Mammary epithelial cell (primary cell): ENCODE measurements at regions of chrX and their contacts with region 1.

Region 1: GRCh38 chrX:15674841-15675489 is 10.4 kb upstream of the CLTRN start:
- DNase-seq: peak; percentile 97
- H3K4me3 ChIP-seq: peak overlapping the region; percentile 59 to 90 (median 82)
- H3K27ac ChIP-seq: peak overlapping the region; percentile 97
- H3K4me1 ChIP-seq: peaks cover 20% of the 10 kb centered on the region
- H3K27me3 ChIP-seq: no peaks in the 10 kb centered on the region
- CTCF ChIP-seq: no peak

Region 2: GRCh38 chrX:15349046-15349445 is 325.9 kb before region 1 on chrX:
- CTCF ChIA-PET with region 1: no interaction called
- dilution Hi-C with region 1: no loop called
- in situ Hi-C with region 1: no loop called
- intact Hi-C with region 1: loop called (anchors 10 kb)
- DNase-seq: peak; percentile 64
- H3K4me3 ChIP-seq: no peak overlapping the region
- H3K27ac ChIP-seq: no peak overlapping the region
- H3K4me1 ChIP-seq: no peaks in the 10 kb centered on the region
- H3K27me3 ChIP-seq: no peaks in the 10 kb centered on the region
- CTCF ChIP-seq: peak; percentile 57 to 71

Region 3: DNA sequence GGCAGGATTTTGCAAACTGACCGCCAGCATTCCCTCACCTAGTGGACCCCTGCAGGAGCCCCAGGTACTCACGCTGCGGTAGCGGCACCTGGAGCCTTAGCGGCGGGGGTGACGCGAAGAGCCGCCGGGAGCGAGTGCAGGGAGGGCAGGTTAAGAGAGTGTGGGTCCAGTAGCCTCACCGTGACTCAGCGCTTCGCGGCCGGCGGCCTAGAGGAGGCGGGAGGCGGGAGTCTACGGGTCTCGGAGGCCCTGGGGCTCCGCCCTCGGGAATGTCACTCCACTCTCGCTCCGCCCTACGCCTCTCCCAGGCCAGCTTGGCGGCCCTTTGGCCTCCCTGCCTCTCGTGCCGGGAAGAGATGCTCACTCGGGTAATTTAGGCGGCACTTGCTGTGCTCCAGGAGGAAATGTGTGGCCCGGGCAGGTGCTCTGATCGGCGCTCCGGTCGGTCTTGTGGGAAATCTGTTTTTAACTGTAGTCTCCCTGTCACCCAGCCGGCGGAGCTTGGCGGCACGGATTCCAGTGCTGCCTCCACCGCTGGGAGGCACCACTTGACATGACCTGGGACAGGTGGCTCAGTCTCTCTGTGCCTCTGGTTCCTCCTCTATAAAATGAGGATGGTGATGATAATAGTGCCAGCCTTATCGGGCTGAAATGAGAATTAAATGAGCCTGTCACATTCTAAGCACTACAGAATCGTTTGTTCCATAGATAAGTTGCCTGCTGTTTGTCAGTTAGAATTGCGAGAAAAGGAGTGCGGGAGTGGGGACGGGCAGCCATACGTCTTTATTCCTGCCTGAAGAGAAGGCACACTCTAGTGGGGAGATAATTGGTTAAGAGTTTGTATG is 181.6 kb before region 1 on chrX and contains the start of gene PIR:
- CTCF ChIA-PET with region 1: no interaction called
- dilution Hi-C with region 1: no loop called
- in situ Hi-C with region 1: loop called in 1 of 2 experiments (anchors 25 kb)
- intact Hi-C with region 1: loop called (anchors 2 kb)
- DNase-seq: peak; percentile 95
- H3K4me3 ChIP-seq: peak within 1 kb of the TSS; percentile 53 to 70 (median 57)
- H3K27ac ChIP-seq: peak within 1 kb of the TSS; percentile 73
- H3K4me1 ChIP-seq: peaks cover 34% of the 10 kb centered on the region
- H3K27me3 ChIP-seq: no peaks in the 10 kb centered on the region
- CTCF ChIP-seq: peak; percentile 44 to 61
- total RNA-seq, gene PIR: 32.8 to 40.9 TPM

Region 4: GRCh38 chrX:15594371-15594770 is 80.6 kb before region 1 on chrX:
- CTCF ChIA-PET with region 1: no interaction called
- dilution Hi-C with region 1: no loop called
- in situ Hi-C with region 1: no loop called
- intact Hi-C with region 1: loop called (anchors 1 kb)
- DNase-seq: no peak
- H3K4me3 ChIP-seq: no peak overlapping the region
- H3K27ac ChIP-seq: no peak overlapping the region
- H3K4me1 ChIP-seq: peaks cover 5% of the 10 kb centered on the region
- H3K27me3 ChIP-seq: no peaks in the 10 kb centered on the region
- CTCF ChIP-seq: peak; percentile 43 to 74

Region 5: DNA sequence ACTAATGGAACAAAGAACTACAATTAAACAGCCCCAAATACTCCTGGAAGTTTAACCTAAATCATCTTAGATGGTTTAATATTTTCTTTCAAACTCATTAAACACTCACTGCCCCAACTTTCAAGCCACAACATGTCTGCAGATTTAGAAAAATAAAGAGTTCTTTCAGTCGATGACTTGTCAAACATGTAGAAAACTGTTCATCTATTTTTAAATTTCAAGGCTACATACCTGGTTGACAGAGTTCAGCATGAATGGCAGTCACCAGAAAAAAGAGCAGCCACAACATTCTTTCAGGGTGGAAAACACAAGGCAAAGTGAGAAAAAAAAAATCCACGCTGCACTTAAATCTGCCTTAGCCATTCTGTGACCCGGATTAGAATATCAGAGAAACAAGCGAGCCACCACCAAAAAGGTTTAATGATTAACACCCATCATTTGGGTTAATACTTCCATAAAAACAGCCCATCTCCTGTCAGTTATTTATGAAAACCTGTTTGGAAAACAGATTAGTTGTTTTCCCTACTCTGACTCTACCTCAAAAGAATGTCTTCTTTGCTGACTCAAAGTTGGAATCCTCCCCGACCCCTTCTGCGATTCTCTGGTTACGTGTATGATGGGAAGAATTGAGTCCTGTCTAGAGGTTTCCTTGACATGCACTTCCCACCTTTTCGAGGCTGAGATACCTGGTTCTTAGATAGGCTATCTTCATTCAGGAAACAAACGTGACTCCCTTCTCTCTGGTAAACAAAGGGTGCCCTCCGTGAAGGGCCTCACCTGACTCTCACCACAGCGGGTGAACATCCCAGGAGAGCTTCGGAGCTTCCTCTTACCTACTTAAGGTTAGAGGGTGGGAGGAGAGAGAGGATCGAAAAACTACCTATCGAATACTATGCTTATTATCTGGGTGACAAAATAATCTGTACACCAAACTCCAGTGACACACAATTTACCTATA is 10.2 kb before region 1 on chrX and contains the start of gene CLTRN:
- CTCF ChIA-PET with region 1: interaction called, 3 read pairs
- dilution Hi-C with region 1: no loop called
- in situ Hi-C with region 1: no loop called
- intact Hi-C with region 1: loop called (anchors 1 kb)
- DNase-seq: peak; percentile 86
- H3K4me3 ChIP-seq: peak within 1 kb of the TSS in 2 of 3 experiments; percentile 12 to 40
- H3K27ac ChIP-seq: peak within 1 kb of the TSS; percentile 94
- H3K4me1 ChIP-seq: peaks cover 34% of the 10 kb centered on the region
- H3K27me3 ChIP-seq: no peaks in the 10 kb centered on the region
- CTCF ChIP-seq: no peak
- total RNA-seq, gene CLTRN: 2.0 to 2.2 TPM

Region 6: DNA sequence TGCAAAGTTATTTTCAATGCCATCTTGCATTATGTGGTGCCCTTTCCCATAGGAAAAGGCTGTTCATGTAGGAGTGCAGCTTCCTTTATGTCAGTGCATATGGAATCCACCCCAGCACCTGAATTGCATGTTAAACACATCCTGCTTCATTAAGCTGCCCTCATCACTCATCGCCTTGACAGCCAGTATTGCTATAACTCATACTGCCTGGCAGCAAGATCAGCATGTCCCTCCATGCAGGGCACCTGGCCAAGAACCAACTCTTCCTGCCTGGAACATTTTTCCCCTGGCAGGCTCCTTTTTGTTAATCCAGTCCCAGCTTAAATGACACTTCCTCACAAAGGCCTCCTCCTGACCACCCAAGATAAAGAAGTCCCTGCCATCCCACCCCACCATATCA is 39.6 kb after region 1 on chrX:
- CTCF ChIA-PET with region 1: no interaction called
- dilution Hi-C with region 1: no loop called
- in situ Hi-C with region 1: no loop called
- intact Hi-C with region 1: no loop called
- DNase-seq: peak; percentile 45
- H3K4me3 ChIP-seq: no peak overlapping the region
- H3K27ac ChIP-seq: no peak overlapping the region
- H3K4me1 ChIP-seq: peaks cover 10% of the 10 kb centered on the region
- H3K27me3 ChIP-seq: no peaks in the 10 kb centered on the region
- CTCF ChIP-seq: no peak